ENCODE measurements at regions of chr5 and their contacts with region 1.

Region 1: DNA sequence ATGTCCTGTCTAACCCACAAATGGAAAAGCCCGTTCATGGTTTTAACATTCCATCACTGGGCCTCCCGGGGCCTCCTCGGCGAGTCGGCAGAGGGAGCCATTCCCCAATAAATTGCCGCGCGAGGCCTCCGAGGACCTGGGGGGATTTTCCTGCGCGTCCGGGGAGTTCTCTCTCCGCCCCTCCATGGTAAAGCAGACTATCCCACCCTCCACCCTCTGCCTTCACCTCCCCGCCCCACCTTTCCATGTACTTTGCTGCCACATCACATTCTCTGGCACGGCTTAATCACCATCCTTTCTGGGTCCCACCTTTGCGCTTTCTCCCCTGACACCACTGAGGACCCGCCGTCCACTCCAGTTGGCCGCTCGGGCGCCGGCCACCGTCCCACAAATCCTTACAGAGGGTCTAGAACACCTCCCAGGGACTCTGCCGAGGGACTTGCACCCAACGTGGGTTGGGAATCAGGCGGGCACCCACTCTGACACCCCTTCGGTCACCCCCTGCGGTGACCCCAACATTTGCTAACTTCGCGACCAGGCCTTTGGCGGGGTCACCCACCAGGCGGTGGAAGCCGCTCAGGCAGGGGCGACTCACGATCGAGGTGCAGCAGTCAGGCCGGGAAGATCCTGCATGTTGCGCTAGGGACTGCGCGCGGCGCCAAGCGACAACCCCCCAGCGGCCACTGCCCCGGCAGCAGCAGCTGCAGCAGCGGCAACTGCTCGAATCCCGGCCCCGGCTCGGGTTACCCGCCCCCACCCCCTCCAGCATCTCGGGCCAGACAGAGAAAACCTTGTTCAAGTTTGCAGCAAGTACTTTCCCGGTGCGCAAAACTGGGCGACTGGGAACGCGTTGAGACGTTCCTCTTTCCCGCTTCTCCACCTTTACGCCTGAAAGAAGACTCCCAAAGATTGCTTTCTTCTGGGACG is at the start of gene MEGF10:
- DNase-seq: peak; percentile 69

Region 2: DNA sequence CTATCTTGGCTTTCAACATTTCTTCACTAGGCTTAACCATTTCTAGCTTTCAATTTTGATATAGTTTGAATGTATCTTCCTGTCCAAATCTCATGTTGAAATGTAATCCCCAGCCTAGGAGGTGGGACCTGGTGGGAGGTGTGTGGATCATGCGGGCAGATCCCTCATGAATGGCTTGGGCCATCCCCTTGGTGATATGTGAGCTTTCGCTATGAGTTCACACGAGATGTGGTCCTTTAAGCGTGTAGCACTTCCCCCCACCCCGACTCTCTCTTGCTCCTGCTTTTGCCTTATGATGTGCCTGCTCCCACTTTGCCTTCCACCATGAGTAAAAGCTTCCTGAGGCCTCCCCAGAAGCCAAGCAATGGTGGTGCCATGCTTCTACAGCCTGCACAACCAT is 648.9 kb before region 1 on chr5:
- in situ Hi-C with region 1: loop called (anchors 25 kb)
- DNase-seq: no peak

Region 3: GRCh38 chr5:127441799-127442484 is 151.7 kb after region 1 on chr5:
- in situ Hi-C with region 1: loop called (anchors 10 kb)
- DNase-seq: peak; percentile 57

Measured in KBM-7 (cell line).